PC-3 (cell line): ENCODE measurements at regions of chr4 and their contacts with region 1.

Region 1: GRCh38 chr4:180664766-180665368 is 1578.3 kb upstream of the TENM3 start:
- DNase-seq: peak; percentile 82
- ATAC-seq: peak; percentile 43
- H3K4me3 ChIP-seq: no peak overlapping the region
- H3K27ac ChIP-seq: no peak overlapping the region
- H3K4me1 ChIP-seq: no peaks in the 10 kb centered on the region
- H3K27me3 ChIP-seq: no peaks in the 10 kb centered on the region
- CTCF ChIP-seq: peak; percentile 72

Region 2: GRCh38 chr4:180682776-180683175 is 17.9 kb after region 1 on chr4:
- CTCF ChIA-PET with region 1: no interaction called
- POLR2A ChIA-PET with region 1: no interaction called
- intact Hi-C with region 1: no loop called
- DNase-seq: no peak
- ATAC-seq: no peak
- H3K4me3 ChIP-seq: no peak overlapping the region
- H3K27ac ChIP-seq: no peak overlapping the region
- H3K4me1 ChIP-seq: no peaks in the 10 kb centered on the region
- H3K27me3 ChIP-seq: peaks cover 4% of the 10 kb centered on the region; the same call in 1 of the 2 replicates
- CTCF ChIP-seq: no peak

Region 3: GRCh38 chr4:180947425-180947824 is 282.6 kb after region 1 on chr4:
- CTCF ChIA-PET with region 1: no interaction called
- POLR2A ChIA-PET with region 1: no interaction called
- intact Hi-C with region 1: loop called (anchors 2 kb)
- DNase-seq: peak; percentile 63
- ATAC-seq: no peak
- H3K4me3 ChIP-seq: no peak overlapping the region
- H3K27ac ChIP-seq: no peak overlapping the region
- H3K4me1 ChIP-seq: peaks cover 7% of the 10 kb centered on the region; the same call in 1 of the 2 replicates
- H3K27me3 ChIP-seq: no peaks in the 10 kb centered on the region
- CTCF ChIP-seq: peak; percentile 55

Region 4: DNA sequence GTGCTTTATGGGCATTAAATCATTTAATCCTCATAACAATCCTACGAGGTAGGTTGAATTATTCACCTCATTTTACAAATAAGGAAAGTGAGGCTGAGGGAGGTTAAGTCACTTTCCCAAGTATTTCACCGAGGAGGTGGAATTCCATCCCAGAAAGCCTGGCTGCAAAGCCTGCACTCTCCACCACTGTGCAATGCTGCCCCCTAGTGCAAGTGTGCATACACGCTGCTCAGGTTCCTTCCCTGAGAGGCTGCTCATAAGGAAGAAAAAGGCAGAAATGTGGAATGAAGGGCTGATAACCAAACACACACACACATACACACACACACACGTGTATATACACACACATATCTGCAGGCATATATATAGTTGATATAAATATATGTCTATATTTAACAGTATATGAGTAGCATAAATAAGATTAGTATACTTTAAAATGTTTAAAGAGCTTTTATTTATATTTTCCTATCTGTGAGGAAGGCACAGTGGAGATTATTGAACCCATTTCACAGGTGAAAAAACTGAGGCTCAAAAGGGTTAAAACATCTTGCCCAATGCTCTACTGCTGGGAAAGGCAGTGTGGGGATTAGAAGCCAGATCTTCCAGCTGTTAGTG is 863.8 kb after region 1 on chr4:
- CTCF ChIA-PET with region 1: no interaction called
- POLR2A ChIA-PET with region 1: no interaction called
- intact Hi-C with region 1: loop called (anchors 10 kb)
- DNase-seq: peak; percentile 71
- ATAC-seq: peak; percentile 64
- H3K4me3 ChIP-seq: no peak overlapping the region
- H3K27ac ChIP-seq: no peak overlapping the region
- H3K4me1 ChIP-seq: no peaks in the 10 kb centered on the region
- H3K27me3 ChIP-seq: no peaks in the 10 kb centered on the region
- CTCF ChIP-seq: peak; percentile 80